H1 (cell line): ENCODE measurements at regions of chr17 and their contacts with region 1.

Region 1: DNA sequence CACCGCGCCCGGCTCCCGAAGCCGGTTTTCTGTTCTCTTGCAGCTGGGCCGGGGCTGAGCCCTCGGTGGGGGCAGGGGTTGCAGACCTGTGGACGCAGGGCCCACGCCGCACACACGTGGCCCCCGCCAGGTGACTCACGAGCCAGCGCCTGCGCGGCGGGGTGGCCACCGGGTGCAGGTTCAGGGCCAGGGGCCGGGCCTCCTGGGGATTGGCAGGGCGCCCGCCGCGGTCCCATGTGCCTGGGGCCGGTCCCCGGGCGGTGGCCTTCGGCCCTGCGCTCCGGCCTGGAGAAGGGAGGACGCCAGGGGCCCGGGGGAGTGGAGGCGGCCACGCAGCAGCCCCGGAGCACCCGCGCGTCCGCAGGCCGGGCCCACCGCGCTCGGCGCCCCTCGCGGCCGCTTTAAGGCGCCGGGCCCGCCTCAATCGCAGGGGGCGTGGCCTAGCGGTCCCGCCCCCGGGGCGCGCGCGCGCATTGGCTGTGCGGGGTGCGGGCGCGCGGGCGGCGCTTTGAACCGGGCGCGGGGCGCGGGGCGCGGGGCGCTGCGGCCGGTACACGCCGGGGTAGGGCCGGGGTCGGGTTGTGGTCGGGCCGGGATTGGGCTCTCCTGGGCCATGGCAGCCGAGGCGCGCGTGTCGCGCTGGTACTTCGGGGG is at the start of gene SLC25A10:
- DNase-seq: peak in 1 of 2 experiments; percentile 85
- H3K4me3 ChIP-seq: peak within 1 kb of the TSS; percentile 48 to 86 (median 60)
- H3K27ac ChIP-seq: no peak within 1 kb of the TSS
- H3K4me1 ChIP-seq: peaks cover 0 to 24% (median 18%) of the 10 kb centered on the region in 4 experiments; a peak in 5 of 7 replicates
- H3K27me3 ChIP-seq: no peaks in the 10 kb centered on the region; a peak in 2 of 7 replicates
- CTCF ChIP-seq: no peak
- EP300 ChIP-seq: no peak
- POLR2A ChIP-seq: 0 out of 3 replicates have a peak, but pooled peaks of 1 of the 2 experiments have one; percentile 31
- RAD21 ChIP-seq: no peak
- total RNA-seq, gene SLC25A10: 22.2 and 25.3 TPM in 2 replicates

Region 2: DNA sequence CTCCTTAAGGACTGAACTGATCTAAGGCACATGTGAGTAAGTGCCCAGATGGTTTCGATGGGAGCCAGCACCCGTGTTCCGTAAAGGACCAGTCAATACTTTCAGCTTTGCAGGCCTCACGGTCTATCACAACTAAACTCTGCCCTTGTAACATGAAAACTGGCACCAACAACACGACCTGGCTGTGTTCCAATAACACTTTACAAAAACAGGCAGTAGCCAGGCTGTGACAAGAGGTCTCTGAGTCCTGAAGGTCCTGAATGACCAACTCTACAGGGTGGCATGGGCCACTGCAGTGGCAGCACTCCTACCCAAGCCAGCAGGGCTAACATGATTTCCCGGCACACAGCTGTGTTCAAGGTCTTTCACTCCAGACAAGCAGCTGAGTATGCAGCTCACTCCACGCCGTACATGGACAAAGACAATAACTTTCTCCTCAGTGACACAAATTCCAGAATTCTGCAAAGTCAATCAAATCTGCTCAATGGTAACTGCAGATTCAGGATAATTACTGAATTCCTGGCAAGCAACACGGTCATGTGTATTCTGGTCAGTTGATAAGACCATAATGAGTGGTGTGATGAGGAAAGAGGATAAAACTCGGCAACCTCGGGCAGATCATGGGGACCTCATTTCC is 90.3 kb before region 1 on chr17:
- CTCF ChIA-PET with region 1: no interaction called
- POLR2A ChIA-PET with region 1: no interaction called
- DNase-seq: no peak
- H3K4me3 ChIP-seq: no peak overlapping the region
- H3K27ac ChIP-seq: no peak overlapping the region
- H3K4me1 ChIP-seq: no peaks in the 10 kb centered on the region
- H3K27me3 ChIP-seq: no peaks in the 10 kb centered on the region
- CTCF ChIP-seq: no peak
- EP300 ChIP-seq: no peak
- POLR2A ChIP-seq: no peak
- RAD21 ChIP-seq: no peak

Region 3: DNA sequence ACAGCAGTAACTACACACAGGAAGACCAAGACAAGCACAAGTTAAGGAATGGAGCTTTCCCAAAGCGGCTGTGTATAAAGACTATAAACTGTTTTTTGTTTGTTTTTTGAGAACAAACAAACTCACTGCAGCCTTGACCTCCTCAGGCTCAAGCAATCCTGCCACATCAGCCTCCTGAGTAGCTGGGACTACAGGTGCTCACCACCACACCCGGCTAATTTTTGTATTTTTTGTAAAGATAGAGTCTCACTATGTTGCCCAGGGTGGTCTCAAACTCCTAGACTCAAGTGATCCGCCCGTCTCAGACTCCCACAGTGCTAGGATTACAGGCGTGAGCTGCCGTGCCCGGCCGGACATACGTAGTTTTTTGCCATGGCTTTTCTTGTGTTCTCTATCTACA is 51.5 kb before region 1 on chr17:
- CTCF ChIA-PET with region 1: no interaction called
- POLR2A ChIA-PET with region 1: no interaction called
- DNase-seq: no peak
- H3K4me3 ChIP-seq: no peak overlapping the region
- H3K27ac ChIP-seq: no peak overlapping the region
- H3K4me1 ChIP-seq: peaks cover under 1 to 5% (median 2%) of the 10 kb centered on the region in 4 experiments
- H3K27me3 ChIP-seq: no peaks in the 10 kb centered on the region
- CTCF ChIP-seq: no peak
- EP300 ChIP-seq: no peak
- POLR2A ChIP-seq: no peak
- RAD21 ChIP-seq: no peak

Region 4: DNA sequence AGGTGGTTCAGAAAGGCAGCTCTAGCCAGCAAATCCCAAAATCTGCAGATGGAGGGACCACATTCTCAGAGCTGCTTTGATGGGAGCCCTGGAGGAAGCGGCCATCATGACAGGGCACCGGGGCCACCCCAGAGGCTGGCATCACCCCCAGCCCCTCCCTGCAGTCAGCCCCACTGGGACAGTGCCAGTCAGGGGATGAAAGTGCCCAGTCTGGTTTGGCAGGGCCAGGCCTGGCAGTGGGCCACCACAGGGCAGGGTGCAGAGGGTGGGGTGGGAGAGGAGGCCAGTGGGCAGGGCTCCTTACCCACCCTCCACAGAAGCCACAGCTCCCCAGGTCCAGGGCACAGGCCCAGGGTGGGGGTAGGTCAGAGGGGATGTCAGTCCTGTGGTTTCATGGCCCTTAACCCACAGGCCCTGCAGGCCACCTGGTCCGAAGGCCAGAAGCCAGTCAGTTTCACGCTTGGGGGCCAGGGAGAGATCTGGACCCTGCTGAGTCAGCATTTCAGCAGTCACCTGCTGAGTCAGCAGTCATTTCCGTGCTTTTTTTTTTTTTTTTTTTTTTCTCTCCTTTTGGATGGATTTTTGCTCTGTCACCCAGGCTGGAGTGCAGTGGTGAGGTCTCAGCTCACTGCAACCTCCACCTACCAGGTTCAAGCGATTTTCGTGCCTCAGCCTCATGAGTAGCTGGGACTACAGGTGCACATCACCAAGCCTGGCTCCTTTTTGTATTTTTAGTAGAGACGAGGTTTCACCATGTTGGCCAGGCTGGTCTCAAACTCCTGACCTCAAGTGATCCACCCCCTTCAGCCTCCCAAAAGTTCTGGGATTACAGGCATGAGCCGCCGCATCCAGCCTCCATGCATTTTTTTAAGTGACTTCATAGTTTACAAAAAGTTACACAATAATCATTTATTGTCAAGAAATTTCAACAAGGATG is 10.5 kb after region 1 on chr17:
- CTCF ChIA-PET with region 1: interaction called, 13 read pairs
- POLR2A ChIA-PET with region 1: interaction called, 348 read pairs
- DNase-seq: peak in 1 of 2 experiments; percentile 52
- H3K4me3 ChIP-seq: no peak overlapping the region
- H3K27ac ChIP-seq: no peak overlapping the region
- H3K4me1 ChIP-seq: peaks cover 0 to 10% (median 3%) of the 10 kb centered on the region in 4 experiments; a peak in 5 of 7 replicates
- H3K27me3 ChIP-seq: no peaks in the 10 kb centered on the region
- CTCF ChIP-seq: no peak
- EP300 ChIP-seq: no peak
- POLR2A ChIP-seq: no peak
- RAD21 ChIP-seq: no peak

Region 5: GRCh38 chr17:81741594-81742452 is 29.9 kb after region 1 on chr17:
- CTCF ChIA-PET with region 1: no interaction called
- POLR2A ChIA-PET with region 1: no interaction called
- DNase-seq: no peak
- H3K4me3 ChIP-seq: no peak overlapping the region
- H3K27ac ChIP-seq: no peak overlapping the region
- H3K4me1 ChIP-seq: 0 out of 7 replicates have a peak, but pooled peaks cover 0 to 2% (median 0%) of the 10 kb centered on the region in 4 experiments
- H3K27me3 ChIP-seq: 0 out of 7 replicates have a peak, but pooled peaks cover 0 to 2% (median 0%) of the 10 kb centered on the region in 4 experiments
- CTCF ChIP-seq: no peak
- EP300 ChIP-seq: no peak
- POLR2A ChIP-seq: no peak
- RAD21 ChIP-seq: no peak

Region 6: GRCh38 chr17:81846743-81847689 is 135.1 kb after region 1 on chr17:
- CTCF ChIA-PET with region 1: no interaction called
- POLR2A ChIA-PET with region 1: no interaction called
- DNase-seq: no peak
- H3K4me3 ChIP-seq: no peak overlapping the region
- H3K27ac ChIP-seq: no peak overlapping the region
- H3K4me1 ChIP-seq: no peaks in the 10 kb centered on the region
- H3K27me3 ChIP-seq: no peaks in the 10 kb centered on the region; a peak in 2 of 7 replicates
- CTCF ChIP-seq: no peak
- EP300 ChIP-seq: no peak
- POLR2A ChIP-seq: no peak
- RAD21 ChIP-seq: no peak